Naive thymus-derived CD4-positive, alpha-beta T cell (primary cell): ENCODE measurements at regions of chr21 and their contacts with region 1.

Region 1: DNA sequence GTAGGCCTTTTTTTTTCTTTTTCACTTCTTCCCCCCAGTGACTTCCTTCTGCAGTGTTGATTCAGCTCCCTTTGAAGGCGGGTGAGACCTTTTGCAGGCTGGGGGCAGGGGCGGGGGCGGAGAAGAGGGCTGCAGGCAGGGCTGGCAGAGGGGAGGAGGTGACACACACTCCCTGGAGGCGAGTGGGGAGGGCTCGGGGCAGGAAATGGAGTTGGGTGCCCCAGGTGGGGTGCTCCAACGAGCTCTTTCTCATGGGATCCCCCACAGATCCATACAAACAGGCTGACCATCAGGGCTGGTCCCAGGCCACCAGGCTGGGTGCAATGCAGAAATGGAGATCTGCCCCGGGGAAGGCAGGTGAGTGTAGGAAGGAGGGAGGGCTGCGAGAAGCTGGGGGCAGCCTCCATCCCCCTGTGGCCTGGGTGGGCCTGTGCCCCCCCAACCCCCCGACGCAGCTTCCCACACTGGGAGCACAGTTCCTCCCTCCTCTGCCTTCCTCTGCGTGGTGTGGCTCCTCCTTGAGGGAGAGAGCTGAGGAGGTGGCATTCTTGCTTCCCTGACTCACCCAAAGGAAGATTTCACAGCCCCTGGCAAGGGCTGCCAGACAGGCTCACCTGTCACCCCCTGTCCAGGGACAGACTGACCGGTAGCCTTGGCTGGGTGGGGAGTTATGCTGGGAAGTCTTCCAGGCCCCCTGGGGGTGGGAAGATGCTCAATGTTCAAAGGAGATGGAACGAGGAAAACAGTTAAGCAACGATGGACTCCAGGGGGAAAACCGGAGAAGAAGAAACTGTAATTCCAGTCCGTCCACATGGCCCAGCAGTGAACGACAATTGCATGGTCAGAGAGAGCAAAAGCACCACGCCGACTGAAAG is 7.1 kb upstream of the ITGB2 start:
- DNase-seq: peak; percentile 43 to 95 (median 85)
- ATAC-seq: peak; percentile 84
- H3K4me3 ChIP-seq: peak overlapping the region; percentile 100
- H3K4me3 Mint-ChIP-seq: peak overlapping the region; percentile 86 to 97 (median 93)
- H3K27ac ChIP-seq: peak overlapping the region; percentile 79
- H3K27ac Mint-ChIP-seq: peak overlapping the region; percentile 86 to 98 (median 95)
- H3K4me1 ChIP-seq: peaks cover 54 to 62% of the 10 kb centered on the region in 2 donors
- H3K4me1 Mint-ChIP-seq: peaks cover 65 to 82% (median 78%) of the 10 kb centered on the region in 7 donors
- H3K27me3 ChIP-seq: no peaks in the 10 kb centered on the region
- H3K27me3 Mint-ChIP-seq: no peaks in the 10 kb centered on the region

Region 2: GRCh38 chr21:43866260-43866629 is 1061.6 kb before region 1 on chr21:
- CTCF ChIA-PET with region 1: no interaction called
- POLR2A ChIA-PET with region 1: no interaction called
- intact Hi-C with region 1: loop called in 1 of 2 experiments (anchors 10 kb)
- DNase-seq: peak in 5 of 9 donors; percentile 17 to 44 (median 31)
- ATAC-seq: peak; percentile 42
- H3K4me3 ChIP-seq: peak overlapping the region; percentile 62
- H3K4me3 Mint-ChIP-seq: peak overlapping the region; percentile 79 to 89 (median 85)
- H3K27ac ChIP-seq: peak overlapping the region; percentile 72
- H3K27ac Mint-ChIP-seq: peak overlapping the region; percentile 77 to 91 (median 89)
- H3K4me1 ChIP-seq: peaks cover 18 to 21% of the 10 kb centered on the region in 2 donors
- H3K4me1 Mint-ChIP-seq: peaks cover 28 to 50% (median 41%) of the 10 kb centered on the region in 7 donors
- H3K27me3 ChIP-seq: no peaks in the 10 kb centered on the region
- H3K27me3 Mint-ChIP-seq: peaks cover 0 to 1% (median 0%) of the 10 kb centered on the region in 5 donors

Region 3: GRCh38 chr21:44657635-44658540 is 269.9 kb before region 1 on chr21 and contains the start of gene KRTAP12-3:
- CTCF ChIA-PET with region 1: no interaction called
- POLR2A ChIA-PET with region 1: interaction called, 3 read pairs
- intact Hi-C with region 1: loop called in 1 of 2 experiments (anchors 5 kb)
- DNase-seq: peak in 8 of 9 donors; percentile 39 to 92 (median 86)
- ATAC-seq: peak; percentile 83
- H3K4me3 ChIP-seq: peak within 1 kb of the TSS; percentile 46
- H3K4me3 Mint-ChIP-seq: peak within 1 kb of the TSS; percentile 63 to 87 (median 76)
- H3K27ac ChIP-seq: peak within 1 kb of the TSS; percentile 63
- H3K27ac Mint-ChIP-seq: peak within 1 kb of the TSS; percentile 87 to 98 (median 98)
- H3K4me1 ChIP-seq: peaks cover 55 to 64% of the 10 kb centered on the region in 2 donors
- H3K4me1 Mint-ChIP-seq: peaks cover 47 to 73% (median 69%) of the 10 kb centered on the region in 7 donors
- H3K27me3 ChIP-seq: no peaks in the 10 kb centered on the region
- H3K27me3 Mint-ChIP-seq: peaks cover 0 to 9% (median 0%) of the 10 kb centered on the region in 5 donors
- total RNA-seq, gene KRTAP12-3: 1.1 TPM in 1 of 5 experiments, not detected in the others

Region 4: GRCh38 chr21:44831227-44831860 is 96.5 kb before region 1 on chr21:
- CTCF ChIA-PET with region 1: no interaction called
- POLR2A ChIA-PET with region 1: no interaction called
- intact Hi-C with region 1: no loop called
- DNase-seq: no peak
- ATAC-seq: peak; percentile 47
- H3K4me3 ChIP-seq: no peak overlapping the region
- H3K4me3 Mint-ChIP-seq: peak overlapping the region in 7 of 10 donors; percentile 23 to 76 (median 40)
- H3K27ac ChIP-seq: peak overlapping the region; percentile 31
- H3K27ac Mint-ChIP-seq: peak overlapping the region in 8 of 9 donors; percentile 48 to 93 (median 76)
- H3K4me1 ChIP-seq: peaks cover 0 to 5% of the 10 kb centered on the region in 2 donors
- H3K4me1 Mint-ChIP-seq: peaks cover 6 to 32% (median 15%) of the 10 kb centered on the region in 7 donors
- H3K27me3 ChIP-seq: no peaks in the 10 kb centered on the region
- H3K27me3 Mint-ChIP-seq: peaks cover 0 to 6% (median 0%) of the 10 kb centered on the region in 5 donors

Region 5: DNA sequence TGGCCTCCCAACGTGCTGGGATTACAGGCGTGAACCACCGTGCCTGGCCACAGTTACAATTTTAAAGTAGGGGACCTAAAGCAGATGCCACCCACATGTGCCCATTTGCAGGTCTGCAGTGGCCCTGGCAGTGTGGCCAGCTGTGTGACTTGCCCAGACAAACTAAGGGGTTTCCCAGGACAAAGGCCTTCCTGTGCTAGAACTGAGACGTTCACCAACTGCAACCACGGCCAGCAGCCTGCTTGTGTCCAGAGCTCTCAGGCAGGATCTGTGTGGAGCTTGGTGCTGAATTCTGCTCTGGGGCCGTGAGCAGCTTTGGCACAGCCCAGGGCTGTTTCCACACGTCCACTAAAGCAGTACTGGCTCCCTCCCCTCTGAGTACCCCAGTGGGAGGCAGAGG is 43.7 kb before region 1 on chr21:
- CTCF ChIA-PET with region 1: interaction called, 7 read pairs
- POLR2A ChIA-PET with region 1: interaction called, 104 read pairs
- intact Hi-C with region 1: no loop called
- DNase-seq: no peak
- ATAC-seq: no peak
- H3K4me3 ChIP-seq: no peak overlapping the region
- H3K4me3 Mint-ChIP-seq: no peak overlapping the region
- H3K27ac ChIP-seq: no peak overlapping the region
- H3K27ac Mint-ChIP-seq: peak overlapping the region in 6 of 9 donors; percentile 1 to 59 (median 52)
- H3K4me1 ChIP-seq: peaks cover 0 to 28% of the 10 kb centered on the region in 2 donors
- H3K4me1 Mint-ChIP-seq: peaks cover 21 to 35% (median 26%) of the 10 kb centered on the region in 7 donors
- H3K27me3 ChIP-seq: no peaks in the 10 kb centered on the region
- H3K27me3 Mint-ChIP-seq: no peaks in the 10 kb centered on the region

Region 6: GRCh38 chr21:44911389-44912157 is 16.3 kb before region 1 on chr21:
- CTCF ChIA-PET with region 1: interaction called, 44 read pairs
- POLR2A ChIA-PET with region 1: interaction called, 569 read pairs
- intact Hi-C with region 1: loop called (anchors 1 kb)
- DNase-seq: peak; percentile 47 to 82 (median 78)
- ATAC-seq: peak; percentile 76
- H3K4me3 ChIP-seq: peak overlapping the region; percentile 49
- H3K4me3 Mint-ChIP-seq: peak overlapping the region; percentile 67 to 91 (median 82)
- H3K27ac ChIP-seq: peak overlapping the region; percentile 80
- H3K27ac Mint-ChIP-seq: peak overlapping the region; percentile 74 to 98 (median 93)
- H3K4me1 ChIP-seq: peaks cover 59 to 83% of the 10 kb centered on the region in 2 donors
- H3K4me1 Mint-ChIP-seq: peaks cover 53 to 86% (median 64%) of the 10 kb centered on the region in 7 donors
- H3K27me3 ChIP-seq: no peaks in the 10 kb centered on the region
- H3K27me3 Mint-ChIP-seq: no peaks in the 10 kb centered on the region

Region 7: GRCh38 chr21:44958471-44959191 is 30.8 kb after region 1 on chr21:
- CTCF ChIA-PET with region 1: no interaction called
- POLR2A ChIA-PET with region 1: no interaction called
- intact Hi-C with region 1: no loop called
- DNase-seq: no peak
- ATAC-seq: no peak
- H3K4me3 ChIP-seq: no peak overlapping the region
- H3K4me3 Mint-ChIP-seq: no peak overlapping the region
- H3K27ac ChIP-seq: no peak overlapping the region
- H3K27ac Mint-ChIP-seq: no peak overlapping the region
- H3K4me1 ChIP-seq: no peaks in the 10 kb centered on the region
- H3K4me1 Mint-ChIP-seq: peaks cover 3 to 20% (median 14%) of the 10 kb centered on the region in 7 donors
- H3K27me3 ChIP-seq: no peaks in the 10 kb centered on the region
- H3K27me3 Mint-ChIP-seq: no peaks in the 10 kb centered on the region